ENCODE measurements at regions of chr1 and their contacts with region 1.

Region 1: GRCh38 chr1:97304366-97304765 is 582.8 kb downstream of the PTBP2 start:
- DNase-seq: no peak
- ATAC-seq: peak; percentile 51

Region 2: GRCh38 chr1:96804648-96805047 is 499.7 kb before region 1 on chr1:
- intact Hi-C with region 1: loop called (anchors 5 kb)
- DNase-seq: no peak
- ATAC-seq: no peak

Measured in sciatic nerve (tissue), 2 donors.